ENCODE measurements at regions of chr2 and their contacts with region 1.

Region 1: GRCh38 chr2:161230959-161231358 is 70.7 kb downstream of the TANK start:
- DNase-seq: no peak
- H3K4me3 ChIP-seq: no peak overlapping the region
- H3K27ac ChIP-seq: no peak overlapping the region
- H3K4me1 ChIP-seq: no peaks in the 10 kb centered on the region
- H3K27me3 ChIP-seq: no peaks in the 10 kb centered on the region
- CTCF ChIP-seq: no peak

Region 2: DNA sequence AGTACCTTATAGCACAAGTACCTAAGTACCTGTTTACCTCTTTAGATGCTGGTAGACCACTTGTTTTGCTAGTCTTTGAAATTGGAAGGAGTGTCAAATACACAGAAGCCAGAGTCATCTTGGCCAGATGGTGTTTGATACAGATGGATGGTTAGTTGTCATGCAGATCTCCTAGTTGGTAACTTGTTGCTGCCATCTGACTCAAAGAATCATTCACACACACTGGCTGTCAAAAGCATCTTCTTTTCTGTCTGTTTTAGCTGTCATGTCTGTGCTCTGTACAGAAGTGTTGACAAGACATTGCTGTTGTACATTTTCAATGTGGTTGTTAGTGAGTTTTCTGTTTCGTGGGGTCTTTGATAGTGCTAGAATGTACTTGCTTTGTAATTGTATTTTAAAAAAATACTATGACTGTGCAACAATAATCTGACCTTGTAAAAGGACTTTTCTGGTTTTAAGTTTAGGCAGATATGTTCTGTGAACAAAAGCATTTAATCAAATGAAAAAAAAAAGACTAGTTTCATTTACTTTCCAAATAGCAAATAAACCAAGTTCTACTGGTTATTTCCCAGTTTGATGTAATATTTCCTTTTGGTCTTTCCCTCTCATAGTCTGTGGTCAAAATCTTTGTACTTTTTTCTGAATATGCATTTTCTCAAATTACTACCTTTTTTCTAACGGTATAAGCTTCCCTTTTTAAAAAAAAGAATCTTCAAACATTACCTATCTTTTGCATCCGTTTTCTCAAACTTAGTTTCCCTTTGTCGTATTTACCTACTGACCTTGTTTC is 30.9 kb before region 1 on chr2:
- intact Hi-C with region 1: loop called (anchors 2 kb)
- DNase-seq: no peak
- H3K4me3 ChIP-seq: no peak overlapping the region
- H3K27ac ChIP-seq: no peak overlapping the region
- H3K4me1 ChIP-seq: peaks cover 0 to 4% (median 0%) of the 10 kb centered on the region in 4 donors
- H3K27me3 ChIP-seq: no peaks in the 10 kb centered on the region
- CTCF ChIP-seq: no peak

Measured in tibial artery (tissue), 4 donors.